GM12878 (cell line): ENCODE measurements at regions of chr2 and their contacts with region 1.

Region 1: GRCh38 chr2:85066874-85067351 is 66.3 kb upstream of the TCF7L1 start:
- DNase-seq: no peak
- ATAC-seq: peak; percentile 90
- H3K4me3 ChIP-seq: no peak overlapping the region
- H3K27ac ChIP-seq: no peak overlapping the region
- H3K4me1 ChIP-seq: no peaks in the 10 kb centered on the region
- H3K27me3 ChIP-seq: no peaks in the 10 kb centered on the region; a peak in 1 of 4 replicates
- CTCF ChIP-seq: peak; percentile 65 to 68 (median 66)
- EP300 ChIP-seq: no peak
- POLR2A ChIP-seq: no peak
- RAD21 ChIP-seq: peak; percentile 72

Region 2: GRCh38 chr2:85053802-85054201 is 13.1 kb before region 1 on chr2:
- CTCF ChIA-PET with region 1: interaction called, 12 read pairs
- POLR2A ChIA-PET with region 1: no interaction called
- RAD21 ChIA-PET with region 1: no interaction called
- SMC1A ChIA-PET with region 1: interaction called, 5 read pairs
- in situ Hi-C with region 1: no loop called
- intact Hi-C with region 1: no loop called
- DNase-seq: no peak
- ATAC-seq: no peak
- H3K4me3 ChIP-seq: no peak overlapping the region
- H3K27ac ChIP-seq: no peak overlapping the region
- H3K4me1 ChIP-seq: no peaks in the 10 kb centered on the region; the same call in 1 of the 2 replicates
- H3K27me3 ChIP-seq: no peaks in the 10 kb centered on the region
- CTCF ChIP-seq: no peak
- EP300 ChIP-seq: no peak
- POLR2A ChIP-seq: no peak
- RAD21 ChIP-seq: no peak

Region 3: DNA sequence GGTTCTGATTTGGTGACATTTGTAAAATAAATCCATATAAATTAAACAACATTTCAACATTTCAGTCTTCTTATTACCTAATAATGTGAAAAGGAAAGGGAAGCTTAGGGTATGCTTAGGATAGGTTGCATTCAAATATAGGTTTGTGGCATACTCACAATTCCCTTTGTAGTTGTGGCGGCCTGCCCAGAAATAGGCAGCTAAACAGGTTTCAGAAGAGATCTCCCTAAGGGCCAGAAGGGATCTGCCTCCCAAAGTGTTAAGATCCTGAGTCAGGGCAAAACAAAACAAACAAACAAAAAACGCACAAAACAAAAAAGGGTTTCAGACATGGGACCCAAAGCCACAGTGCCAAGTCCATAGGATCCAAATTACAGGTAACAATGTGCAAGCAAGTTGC is 24.9 kb after region 1 on chr2:
- CTCF ChIA-PET with region 1: no interaction called
- POLR2A ChIA-PET with region 1: no interaction called
- RAD21 ChIA-PET with region 1: no interaction called
- SMC1A ChIA-PET with region 1: no interaction called
- in situ Hi-C with region 1: no loop called
- intact Hi-C with region 1: no loop called
- DNase-seq: no peak
- ATAC-seq: no peak
- H3K4me3 ChIP-seq: no peak overlapping the region
- H3K27ac ChIP-seq: no peak overlapping the region
- H3K4me1 ChIP-seq: no peaks in the 10 kb centered on the region
- H3K27me3 ChIP-seq: peaks cover 2 to 5% of the 10 kb centered on the region in 2 experiments
- CTCF ChIP-seq: no peak
- EP300 ChIP-seq: no peak
- POLR2A ChIP-seq: no peak
- RAD21 ChIP-seq: no peak

Region 4: DNA sequence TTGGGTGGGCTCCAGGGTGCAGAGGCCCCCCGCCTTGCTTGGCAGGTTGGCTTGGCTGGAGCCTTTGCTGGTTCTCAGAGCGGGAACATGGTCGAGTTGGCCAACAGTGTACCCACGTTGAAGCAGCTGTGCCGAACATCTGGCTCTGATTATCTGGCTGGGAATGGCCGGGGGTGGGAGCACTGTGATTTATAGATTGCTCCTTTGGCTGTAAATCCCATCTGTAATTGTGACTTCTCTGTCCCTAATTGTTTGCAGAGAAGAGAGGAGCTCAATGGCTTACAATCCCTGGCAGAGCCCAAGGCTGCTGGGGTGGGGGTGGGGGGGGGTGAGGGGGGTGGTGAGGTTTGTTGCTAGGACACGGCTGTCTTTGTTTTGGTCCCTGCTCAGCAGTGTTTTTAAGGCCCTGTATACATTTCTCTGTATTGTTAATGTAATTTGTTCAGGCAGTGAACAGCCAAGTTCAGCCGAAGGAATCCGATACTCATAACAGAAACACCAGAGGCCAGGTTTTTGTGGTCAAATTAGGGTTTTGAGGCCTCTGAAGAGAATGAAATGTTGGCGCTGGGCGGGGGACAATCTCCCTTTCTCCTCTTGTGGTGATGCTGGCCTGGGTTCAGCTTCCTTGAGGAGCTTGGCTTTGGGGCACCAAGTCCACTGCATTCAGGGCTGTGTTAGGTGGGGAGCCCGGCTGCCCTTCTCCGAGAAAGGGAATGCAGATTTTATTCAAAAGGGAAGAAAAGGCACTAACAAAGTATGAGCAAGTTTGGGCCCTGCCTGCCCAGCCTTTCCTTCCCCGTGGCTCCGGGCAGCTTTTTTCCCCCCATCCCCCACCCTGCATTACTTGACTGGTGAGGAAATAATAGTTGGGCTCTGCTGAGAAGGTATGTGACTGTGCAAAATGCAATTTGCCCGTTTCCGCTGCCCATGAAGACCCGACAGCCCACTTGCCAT is 148.8 kb after region 1 on chr2:
- CTCF ChIA-PET with region 1: no interaction called
- POLR2A ChIA-PET with region 1: no interaction called
- RAD21 ChIA-PET with region 1: no interaction called
- SMC1A ChIA-PET with region 1: no interaction called
- in situ Hi-C with region 1: no loop called
- intact Hi-C with region 1: loop called (anchors 5 kb)
- DNase-seq: no peak
- ATAC-seq: peak; percentile 62
- H3K4me3 ChIP-seq: no peak overlapping the region
- H3K27ac ChIP-seq: no peak overlapping the region
- H3K4me1 ChIP-seq: no peaks in the 10 kb centered on the region
- H3K27me3 ChIP-seq: no peaks in the 10 kb centered on the region
- CTCF ChIP-seq: no peak
- EP300 ChIP-seq: no peak
- POLR2A ChIP-seq: no peak
- RAD21 ChIP-seq: no peak

Region 5: GRCh38 chr2:85243101-85244072 is 176.5 kb after region 1 on chr2:
- CTCF ChIA-PET with region 1: interaction called, 3 read pairs
- POLR2A ChIA-PET with region 1: no interaction called
- RAD21 ChIA-PET with region 1: no interaction called
- SMC1A ChIA-PET with region 1: no interaction called
- in situ Hi-C with region 1: no loop called
- intact Hi-C with region 1: loop called (anchors 1 kb)
- DNase-seq: no peak
- ATAC-seq: peak; percentile 69
- H3K4me3 ChIP-seq: no peak overlapping the region
- H3K27ac ChIP-seq: no peak overlapping the region
- H3K4me1 ChIP-seq: no peaks in the 10 kb centered on the region
- H3K27me3 ChIP-seq: peaks cover 0 to 2% of the 10 kb centered on the region in 2 experiments; a peak in 2 of 4 replicates
- CTCF ChIP-seq: peak; percentile 36 to 60 (median 46)
- EP300 ChIP-seq: no peak
- POLR2A ChIP-seq: no peak
- RAD21 ChIP-seq: peak; percentile 16; the same call in 1 of the 2 replicates

Region 6: DNA sequence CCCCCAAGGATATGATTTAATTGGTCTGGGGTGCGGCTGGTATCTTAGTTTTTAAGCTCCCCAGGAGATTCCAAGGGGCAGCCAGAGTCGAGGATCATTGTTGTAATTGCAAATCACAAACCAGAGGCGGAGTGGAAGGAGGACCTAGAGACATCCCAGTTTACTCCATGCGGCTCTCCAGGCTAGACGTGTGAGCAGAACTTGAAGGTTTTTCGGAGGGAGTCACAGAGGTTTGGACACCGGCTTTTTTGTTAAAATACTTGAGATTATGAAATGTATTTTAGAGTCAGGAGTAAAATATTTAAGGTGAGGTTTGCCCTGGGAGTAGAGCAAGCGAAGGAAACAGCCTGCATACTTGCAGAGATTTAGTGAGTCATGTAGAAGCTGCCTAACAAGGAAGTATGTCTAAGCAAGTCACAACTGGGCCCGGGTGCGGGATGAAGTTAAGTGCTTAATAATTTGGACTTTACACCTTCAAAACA is 221.4 kb after region 1 on chr2:
- CTCF ChIA-PET with region 1: interaction called, 12 read pairs
- POLR2A ChIA-PET with region 1: interaction called, 3 read pairs
- RAD21 ChIA-PET with region 1: no interaction called
- SMC1A ChIA-PET with region 1: interaction called, 5 read pairs
- in situ Hi-C with region 1: loop called (anchors 5 kb)
- intact Hi-C with region 1: loop called (anchors 2 kb)
- DNase-seq: no peak
- ATAC-seq: no peak
- H3K4me3 ChIP-seq: no peak overlapping the region
- H3K27ac ChIP-seq: no peak overlapping the region
- H3K4me1 ChIP-seq: no peaks in the 10 kb centered on the region; the same call in 1 of the 2 replicates
- H3K27me3 ChIP-seq: no peaks in the 10 kb centered on the region; a peak in 1 of 4 replicates
- CTCF ChIP-seq: no peak
- EP300 ChIP-seq: no peak
- POLR2A ChIP-seq: no peak
- RAD21 ChIP-seq: no peak